Activated CD4-positive, alpha-beta T cell treated with anti-CD3 and anti-CD28 coated beads for 36 hours (primary cell): ENCODE measurements at regions of chr1 and their contacts with region 1.

Region 1: GRCh38 chr1:231337472-231338269 is at the start of gene EXOC8:
- DNase-seq: peak; percentile 97
- ATAC-seq: peak; percentile 82
- H3K4me3 Mint-ChIP-seq: peak within 1 kb of the TSS; percentile 93
- H3K27ac Mint-ChIP-seq: peak within 1 kb of the TSS; percentile 98
- H3K4me1 Mint-ChIP-seq: peaks cover 44% of the 10 kb centered on the region
- H3K27me3 Mint-ChIP-seq: no peaks in the 10 kb centered on the region
- total RNA-seq, gene EXOC8: 10.0 to 13.7 TPM

Region 2: GRCh38 chr1:230867903-230868735 is 469.6 kb before region 1 on chr1 and contains the start of gene C1orf198:
- CTCF ChIA-PET with region 1: no interaction called
- POLR2A ChIA-PET with region 1: no interaction called
- intact Hi-C with region 1: loop called in 1 of 2 experiments (anchors 5 kb)
- DNase-seq: peak; percentile 86
- ATAC-seq: peak; percentile 90
- H3K4me3 Mint-ChIP-seq: peak within 1 kb of the TSS; percentile 80
- H3K27ac Mint-ChIP-seq: peak within 1 kb of the TSS; percentile 21
- H3K4me1 Mint-ChIP-seq: peaks cover 22% of the 10 kb centered on the region
- H3K27me3 Mint-ChIP-seq: peaks cover 14% of the 10 kb centered on the region
- total RNA-seq, gene C1orf198: 5.8 to 6.9 TPM

Region 3: GRCh38 chr1:231240883-231241735 is 96.6 kb before region 1 on chr1 and contains the start of gene GNPAT:
- CTCF ChIA-PET with region 1: interaction called, 6 read pairs
- POLR2A ChIA-PET with region 1: interaction called, 4 read pairs
- intact Hi-C with region 1: loop called (anchors 1 kb)
- DNase-seq: peak; percentile 94
- ATAC-seq: peak; percentile 98
- H3K4me3 Mint-ChIP-seq: peak within 1 kb of the TSS; percentile 98
- H3K27ac Mint-ChIP-seq: peak within 1 kb of the TSS; percentile 95
- H3K4me1 Mint-ChIP-seq: peaks cover 58% of the 10 kb centered on the region
- H3K27me3 Mint-ChIP-seq: no peaks in the 10 kb centered on the region
- total RNA-seq, gene GNPAT: 58.0 to 62.0 TPM

Region 4: DNA sequence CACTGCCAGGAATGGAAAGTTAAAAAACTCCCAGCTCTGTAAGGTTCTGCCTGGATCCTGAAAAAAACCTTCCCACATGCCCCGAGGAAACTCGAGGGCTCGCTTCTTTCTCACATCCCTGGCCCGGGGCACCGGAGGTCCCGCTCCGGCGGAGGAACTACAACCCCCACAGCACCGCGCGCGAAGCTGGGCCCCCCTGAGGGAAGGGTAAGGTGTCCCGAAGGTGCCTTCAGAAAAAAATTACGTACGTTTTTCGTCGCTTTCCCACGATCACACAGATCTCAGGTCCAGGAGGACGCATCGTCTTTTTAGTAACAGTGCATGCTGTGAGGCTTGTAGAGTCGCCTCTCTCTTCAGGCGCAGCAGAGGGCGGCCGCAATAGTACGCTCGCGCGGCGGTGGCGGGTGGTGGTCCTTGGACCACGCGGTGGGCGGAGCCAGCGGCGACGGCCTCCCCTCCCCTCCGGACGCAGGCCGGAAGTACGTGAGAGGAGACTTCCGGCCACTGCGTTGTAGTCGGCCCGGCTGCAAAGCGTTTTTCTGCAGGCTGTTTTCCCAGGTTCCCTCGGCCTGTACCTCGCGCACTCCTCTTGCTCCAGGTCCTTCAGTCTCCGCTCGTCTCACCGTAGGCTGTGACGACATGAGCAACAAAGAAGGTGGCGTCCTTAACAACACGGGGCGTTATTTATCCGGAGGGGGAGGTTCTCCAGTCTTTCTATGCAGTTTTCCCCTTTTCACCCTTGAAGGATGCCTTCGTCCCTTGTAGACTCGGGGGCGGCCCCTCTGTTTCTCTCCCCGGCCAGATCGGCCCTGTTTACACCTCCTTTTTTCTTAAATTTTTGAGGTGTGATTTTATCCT is 190.7 kb after region 1 on chr1 and contains the start of gene TSNAX:
- CTCF ChIA-PET with region 1: interaction called, 5 read pairs
- POLR2A ChIA-PET with region 1: interaction called, 11 read pairs
- intact Hi-C with region 1: loop called (anchors 1 kb)
- DNase-seq: peak; percentile 94
- ATAC-seq: peak; percentile 93
- H3K4me3 Mint-ChIP-seq: peak within 1 kb of the TSS; percentile 88
- H3K27ac Mint-ChIP-seq: peak within 1 kb of the TSS; percentile 99
- H3K4me1 Mint-ChIP-seq: peaks cover 45% of the 10 kb centered on the region
- H3K27me3 Mint-ChIP-seq: no peaks in the 10 kb centered on the region
- total RNA-seq, gene TSNAX: 36.5 to 46.7 TPM

Region 5: DNA sequence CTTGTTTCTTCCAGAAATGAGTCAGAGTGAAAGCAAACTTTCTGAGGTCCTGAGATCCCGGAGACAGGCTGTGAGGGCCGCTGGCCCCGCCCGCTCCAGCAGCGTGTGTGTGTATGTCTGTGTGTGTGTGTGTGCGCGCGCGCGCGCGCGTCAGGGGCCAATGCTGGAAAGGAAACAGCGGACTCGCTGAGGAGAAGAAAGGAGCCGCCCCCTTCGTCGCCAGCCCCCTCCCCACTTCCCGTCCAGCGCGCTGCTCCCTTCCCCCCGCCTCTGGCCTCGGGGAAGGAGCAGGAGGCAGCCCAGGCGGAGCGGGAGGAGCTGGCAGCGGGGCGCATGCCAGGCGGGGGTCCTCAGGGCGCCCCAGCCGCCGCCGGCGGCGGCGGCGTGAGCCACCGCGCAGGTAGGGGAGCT is 288.9 kb after region 1 on chr1 and contains the start of gene DISC1:
- CTCF ChIA-PET with region 1: no interaction called
- POLR2A ChIA-PET with region 1: no interaction called
- intact Hi-C with region 1: loop called in 1 of 2 experiments (anchors 1 kb)
- DNase-seq: peak; percentile 80
- ATAC-seq: peak; percentile 60
- H3K4me3 Mint-ChIP-seq: peak within 1 kb of the TSS; percentile 80
- H3K27ac Mint-ChIP-seq: peak within 1 kb of the TSS; percentile 71
- H3K4me1 Mint-ChIP-seq: peaks cover 32% of the 10 kb centered on the region
- H3K27me3 Mint-ChIP-seq: peaks cover 3% of the 10 kb centered on the region
- total RNA-seq, gene DISC1: 1.9 to 3.8 TPM